ENCODE measurements at regions of chr15 and their contacts with region 1.

Region 1: GRCh38 chr15:84600851-84601838 is at the start of gene ZSCAN2:
- DNase-seq: peak; percentile 96 to 97
- ATAC-seq: peak; percentile 97 to 99 (median 98)
- H3K4me3 ChIP-seq: peak within 1 kb of the TSS; percentile 100
- H3K27ac ChIP-seq: peak within 1 kb of the TSS; percentile 82
- H3K4me1 ChIP-seq: no peaks in the 10 kb centered on the region
- H3K27me3 ChIP-seq: no peaks in the 10 kb centered on the region
- CTCF ChIP-seq: no peak
- total RNA-seq, gene ZSCAN2: 3.3 to 5.4 (median 4.4) TPM

Region 2: DNA sequence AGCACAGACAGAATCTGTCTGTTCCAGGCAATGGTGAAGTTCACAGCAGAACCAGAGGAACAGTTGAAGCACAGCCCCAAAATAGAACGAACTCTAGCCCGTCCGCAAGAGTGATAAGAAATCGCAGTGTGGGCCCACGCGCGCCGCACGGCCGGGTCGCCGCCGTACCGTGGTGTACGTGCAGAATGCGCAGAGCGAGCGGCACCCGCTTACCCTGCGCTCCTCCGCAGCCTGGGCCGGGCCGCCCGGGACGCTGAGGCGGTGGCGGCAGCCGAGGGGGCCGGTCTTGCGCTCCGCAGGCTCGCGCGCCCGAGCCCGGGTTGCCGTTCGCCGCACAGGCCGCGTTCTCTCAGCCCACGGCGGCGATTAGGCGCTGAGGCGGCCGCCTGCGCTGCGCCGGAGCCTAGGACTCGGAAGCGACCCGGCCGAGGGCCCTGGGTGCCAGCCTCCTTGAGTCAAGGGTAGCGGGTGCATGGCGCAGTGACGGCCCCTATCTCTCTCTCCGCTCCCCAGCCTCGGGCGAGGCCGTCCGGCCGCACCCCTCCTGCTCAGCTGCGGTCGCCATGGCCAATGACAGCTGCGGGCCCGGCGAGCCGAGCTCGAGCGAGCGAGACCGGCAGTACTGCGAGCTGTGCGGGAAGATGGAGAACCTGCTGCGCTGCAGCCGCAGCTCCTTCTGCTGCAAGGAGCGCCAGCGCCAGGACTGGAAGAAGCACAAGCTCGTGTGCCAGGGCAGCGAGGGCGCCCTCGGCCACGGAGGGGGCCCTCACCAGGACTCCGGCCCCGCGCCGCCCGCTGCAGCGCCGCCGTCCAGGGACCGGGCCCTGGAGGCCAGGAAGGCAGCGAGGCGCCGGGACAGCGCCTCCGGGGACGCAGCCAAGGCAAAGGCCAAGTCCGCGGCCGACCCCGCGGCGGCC is 32.4 kb after region 1 on chr15:
- intact Hi-C with region 1: loop called (anchors 2 kb)
- DNase-seq: peak; percentile 71 to 85
- ATAC-seq: peak; percentile 64 to 70 (median 64)
- H3K4me3 ChIP-seq: peak overlapping the region; percentile 89
- H3K27ac ChIP-seq: peak overlapping the region; percentile 97
- H3K4me1 ChIP-seq: peaks cover 28% of the 10 kb centered on the region
- H3K27me3 ChIP-seq: no peaks in the 10 kb centered on the region
- CTCF ChIP-seq: no peak

Region 3: GRCh38 chr15:84643838-84644237 is 42.7 kb after region 1 on chr15:
- intact Hi-C with region 1: no loop called
- DNase-seq: no peak
- ATAC-seq: peak in 2 of 4 donors; percentile 34 to 64
- H3K4me3 ChIP-seq: no peak overlapping the region
- H3K27ac ChIP-seq: peak overlapping the region; percentile 13
- H3K4me1 ChIP-seq: no peaks in the 10 kb centered on the region
- H3K27me3 ChIP-seq: no peaks in the 10 kb centered on the region
- CTCF ChIP-seq: no peak

Region 4: DNA sequence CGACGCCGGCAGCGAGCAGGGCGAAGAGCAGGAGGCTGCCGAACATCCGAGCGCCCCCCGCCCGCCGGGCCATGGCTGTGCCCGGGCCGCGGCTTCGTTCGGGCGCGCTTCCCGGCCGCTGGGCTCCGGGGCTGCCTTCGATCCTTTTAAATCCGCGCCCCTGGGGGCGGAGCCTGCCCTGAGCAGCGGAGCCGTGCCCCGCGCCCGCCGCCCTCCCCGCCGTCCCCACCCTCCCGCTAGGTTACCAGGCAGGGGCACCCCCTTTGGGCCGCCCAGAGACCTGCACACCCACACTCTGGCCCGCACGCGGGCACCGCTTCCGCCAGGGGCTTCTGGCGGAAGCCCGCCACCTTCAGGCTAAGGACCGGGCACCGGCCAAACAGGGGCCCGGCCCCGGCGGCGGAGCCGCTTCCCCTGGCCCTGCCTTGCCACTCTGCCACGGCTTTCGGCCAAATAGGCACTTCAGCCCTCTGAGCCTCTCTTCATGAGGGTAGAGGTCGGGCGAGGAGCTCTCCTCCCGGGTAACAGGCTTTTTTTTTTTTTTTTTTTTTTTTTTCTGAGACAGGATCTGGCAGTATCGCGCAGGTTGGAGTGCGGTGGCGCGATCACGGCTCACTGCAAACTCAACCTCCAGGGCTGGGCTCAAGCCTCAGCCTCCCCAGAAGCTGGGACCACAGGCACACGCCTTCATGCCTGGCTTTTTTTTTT is 57.1 kb after region 1 on chr15 and contains the start of gene NMB:
- intact Hi-C with region 1: loop called in 1 of 2 experiments (anchors 5 kb)
- DNase-seq: peak; percentile 81 to 90
- ATAC-seq: peak; percentile 61 to 80 (median 74)
- H3K4me3 ChIP-seq: peak within 1 kb of the TSS; percentile 73
- H3K27ac ChIP-seq: peak within 1 kb of the TSS; percentile 80
- H3K4me1 ChIP-seq: peaks cover 18% of the 10 kb centered on the region
- H3K27me3 ChIP-seq: no peaks in the 10 kb centered on the region
- CTCF ChIP-seq: peak; percentile 44
- total RNA-seq, gene NMB: 1.0 to 2.1 (median 1.2) TPM

Region 5: DNA sequence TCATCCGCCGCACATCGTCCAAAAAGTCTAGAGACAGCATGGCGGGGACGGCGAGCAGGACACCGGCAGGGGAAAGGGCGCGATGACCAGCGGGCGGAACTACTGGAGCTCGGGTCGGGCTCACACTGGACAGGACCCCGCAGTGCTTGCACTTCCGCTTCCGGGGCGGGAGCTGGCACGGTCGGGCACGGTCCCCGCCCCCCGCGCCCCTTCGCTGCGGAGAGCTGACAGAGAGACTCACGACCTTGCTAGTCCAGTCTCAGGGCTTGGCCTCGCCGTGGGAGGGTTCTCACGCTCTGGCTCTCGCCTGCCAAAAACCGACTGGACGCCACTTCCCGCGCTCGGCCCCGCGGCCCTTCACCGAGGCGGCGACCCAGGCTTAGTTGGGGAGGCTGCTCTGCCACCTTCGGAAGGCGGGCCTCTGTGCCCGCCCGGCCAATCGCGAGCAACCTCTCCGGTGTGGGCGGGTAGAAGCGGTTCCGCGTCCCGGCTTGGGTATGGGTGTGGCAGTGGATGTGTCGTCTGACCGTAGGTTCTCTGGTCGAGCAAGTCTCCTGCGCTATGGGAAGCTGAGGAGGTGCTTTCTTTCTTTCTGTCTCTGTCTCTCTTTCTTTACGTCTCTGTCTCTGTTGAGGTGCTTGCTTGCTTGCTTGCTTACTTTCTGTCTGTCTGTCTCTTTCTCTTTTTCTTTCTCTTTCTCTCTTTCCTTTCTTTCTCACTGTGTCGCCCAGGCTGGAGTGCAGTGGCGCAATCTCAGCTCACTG is 115.1 kb after region 1 on chr15 and contains the start of gene SEC11A:
- intact Hi-C with region 1: loop called in 1 of 2 experiments (anchors 10 kb)
- DNase-seq: peak; percentile 97
- ATAC-seq: peak; percentile 97 to 98 (median 98)
- H3K4me3 ChIP-seq: peak within 1 kb of the TSS; percentile 90
- H3K27ac ChIP-seq: peak within 1 kb of the TSS; percentile 96
- H3K4me1 ChIP-seq: peaks cover 21% of the 10 kb centered on the region
- H3K27me3 ChIP-seq: no peaks in the 10 kb centered on the region
- CTCF ChIP-seq: no peak
- total RNA-seq, gene SEC11A: 80.7 to 106 (median 95.5) TPM

Region 6: GRCh38 chr15:85289677-85290365 is 688.7 kb after region 1 on chr15:
- intact Hi-C with region 1: loop called in 1 of 2 experiments (anchors 5 kb)
- DNase-seq: peak; percentile 28 to 72
- ATAC-seq: peak; percentile 88 to 98 (median 91)
- H3K4me3 ChIP-seq: no peak overlapping the region
- H3K27ac ChIP-seq: no peak overlapping the region
- H3K4me1 ChIP-seq: no peaks in the 10 kb centered on the region
- H3K27me3 ChIP-seq: no peaks in the 10 kb centered on the region
- CTCF ChIP-seq: peak; percentile 67

Measured in psoas muscle (tissue), 8 donors.